Mammary epithelial cell (primary cell): ENCODE measurements at regions of chr12 and their contacts with region 1.

Region 1: DNA sequence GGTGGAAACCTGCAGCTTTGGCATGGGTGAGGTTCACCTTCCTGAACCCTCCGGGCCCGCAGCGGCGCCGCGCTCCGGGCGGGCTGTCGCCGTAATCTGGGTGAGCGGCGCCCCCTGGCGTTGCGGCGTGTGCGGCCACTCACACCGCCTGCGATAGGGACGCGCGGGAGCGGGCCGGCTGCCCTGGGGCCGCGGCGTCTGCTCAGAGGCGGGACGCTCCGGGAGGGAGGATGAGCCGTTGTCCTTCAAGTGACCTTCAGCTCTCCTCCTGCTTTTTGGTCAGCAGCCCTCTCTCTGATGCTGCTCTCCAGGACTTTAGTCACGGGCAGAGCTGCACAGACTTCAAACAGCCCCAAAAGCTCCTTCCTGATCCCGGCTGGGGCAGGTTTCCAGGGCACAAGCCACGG is 211.7 kb upstream of the FKBP4 start:
- DNase-seq: peak; percentile 25
- H3K4me3 ChIP-seq: no peak overlapping the region
- H3K27ac ChIP-seq: no peak overlapping the region
- H3K4me1 ChIP-seq: peaks cover 5% of the 10 kb centered on the region
- H3K27me3 ChIP-seq: peaks cover 5% of the 10 kb centered on the region
- CTCF ChIP-seq: peak; percentile 61 to 73

Region 2: DNA sequence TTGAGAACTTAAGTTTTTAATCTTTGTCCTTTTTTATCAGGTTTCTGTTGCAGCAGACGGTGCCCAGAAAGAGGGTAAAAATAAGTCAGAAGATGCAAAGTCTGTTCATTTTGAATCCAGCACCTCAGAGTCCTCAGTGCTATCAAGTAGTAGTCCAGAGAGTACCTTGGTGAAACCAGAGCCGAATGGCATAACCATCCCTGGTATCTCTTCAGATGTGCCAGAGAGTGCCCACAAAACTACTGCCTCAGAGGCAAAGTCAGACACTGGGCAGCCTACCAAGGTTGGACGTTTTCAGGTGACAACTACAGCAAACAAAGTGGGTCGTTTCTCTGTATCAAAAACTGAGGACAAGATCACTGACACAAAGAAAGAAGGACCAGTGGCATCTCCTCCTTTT is 1687.1 kb before region 1 on chr12:
- CTCF ChIA-PET with region 1: no interaction called
- dilution Hi-C with region 1: no loop called
- in situ Hi-C with region 1: no loop called
- intact Hi-C with region 1: no loop called
- DNase-seq: no peak
- H3K4me3 ChIP-seq: no peak overlapping the region
- H3K27ac ChIP-seq: no peak overlapping the region
- H3K4me1 ChIP-seq: no peaks in the 10 kb centered on the region
- H3K27me3 ChIP-seq: no peaks in the 10 kb centered on the region
- CTCF ChIP-seq: no peak

Region 3: GRCh38 chr12:1634590-1635191 is 948.4 kb before region 1 on chr12:
- CTCF ChIA-PET with region 1: no interaction called
- dilution Hi-C with region 1: no loop called
- in situ Hi-C with region 1: loop called (anchors 25 kb)
- intact Hi-C with region 1: loop called (anchors 10 kb)
- DNase-seq: peak; percentile 43
- H3K4me3 ChIP-seq: no peak overlapping the region
- H3K27ac ChIP-seq: no peak overlapping the region
- H3K4me1 ChIP-seq: peaks cover 9% of the 10 kb centered on the region
- H3K27me3 ChIP-seq: peaks cover 2% of the 10 kb centered on the region
- CTCF ChIP-seq: peak; percentile 95 to 97

Region 4: GRCh38 chr12:1939801-1940607 is 643.1 kb before region 1 on chr12:
- CTCF ChIA-PET with region 1: interaction called, 3 read pairs
- dilution Hi-C with region 1: no loop called
- in situ Hi-C with region 1: no loop called
- intact Hi-C with region 1: loop called (anchors 10 kb)
- DNase-seq: peak; percentile 57
- H3K4me3 ChIP-seq: no peak overlapping the region
- H3K27ac ChIP-seq: no peak overlapping the region
- H3K4me1 ChIP-seq: no peaks in the 10 kb centered on the region
- H3K27me3 ChIP-seq: no peaks in the 10 kb centered on the region
- CTCF ChIP-seq: peak; percentile 90 to 95

Region 5: DNA sequence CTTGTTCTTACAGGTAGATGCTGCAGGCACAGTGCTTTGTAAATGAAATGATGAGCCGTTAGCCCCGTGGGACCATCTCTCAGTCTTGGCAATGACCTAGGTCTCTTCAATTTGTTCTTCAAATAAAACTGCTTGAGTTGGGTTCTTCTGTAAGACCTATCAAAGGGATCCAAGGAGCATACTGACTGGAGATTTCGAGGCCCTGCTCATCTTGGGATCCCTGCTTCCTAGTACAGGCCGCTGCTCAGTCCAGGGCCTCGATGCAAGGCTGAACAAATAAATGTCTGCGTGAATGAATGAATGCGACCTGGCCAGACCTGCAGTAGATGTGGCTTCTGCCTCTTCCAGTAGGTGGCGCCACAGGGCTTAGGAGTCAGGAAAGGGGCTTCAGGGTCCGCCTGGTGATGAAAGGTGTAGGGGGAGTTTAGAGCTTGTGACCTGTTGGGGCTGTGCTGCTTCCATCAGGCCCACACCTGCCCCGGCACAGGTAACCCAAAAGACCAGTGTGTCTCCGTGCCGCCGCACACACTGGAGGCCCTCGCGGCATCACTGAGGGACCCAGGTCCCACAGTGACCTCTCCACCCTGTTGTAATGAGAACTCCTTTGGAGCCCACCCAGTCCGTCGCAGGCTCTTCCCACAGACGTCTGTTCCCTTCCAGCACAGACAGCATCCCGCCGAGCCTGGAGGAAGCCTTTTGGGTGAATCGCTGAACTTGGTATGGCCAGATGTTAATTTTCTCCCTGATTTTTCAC is 525.9 kb before region 1 on chr12:
- CTCF ChIA-PET with region 1: no interaction called
- dilution Hi-C with region 1: no loop called
- in situ Hi-C with region 1: loop called (anchors 10 kb)
- intact Hi-C with region 1: loop called (anchors 1 kb)
- DNase-seq: peak; percentile 14
- H3K4me3 ChIP-seq: no peak overlapping the region
- H3K27ac ChIP-seq: no peak overlapping the region
- H3K4me1 ChIP-seq: no peaks in the 10 kb centered on the region
- H3K27me3 ChIP-seq: peaks cover 31% of the 10 kb centered on the region
- CTCF ChIP-seq: peak; percentile 81 to 86

Region 6: DNA sequence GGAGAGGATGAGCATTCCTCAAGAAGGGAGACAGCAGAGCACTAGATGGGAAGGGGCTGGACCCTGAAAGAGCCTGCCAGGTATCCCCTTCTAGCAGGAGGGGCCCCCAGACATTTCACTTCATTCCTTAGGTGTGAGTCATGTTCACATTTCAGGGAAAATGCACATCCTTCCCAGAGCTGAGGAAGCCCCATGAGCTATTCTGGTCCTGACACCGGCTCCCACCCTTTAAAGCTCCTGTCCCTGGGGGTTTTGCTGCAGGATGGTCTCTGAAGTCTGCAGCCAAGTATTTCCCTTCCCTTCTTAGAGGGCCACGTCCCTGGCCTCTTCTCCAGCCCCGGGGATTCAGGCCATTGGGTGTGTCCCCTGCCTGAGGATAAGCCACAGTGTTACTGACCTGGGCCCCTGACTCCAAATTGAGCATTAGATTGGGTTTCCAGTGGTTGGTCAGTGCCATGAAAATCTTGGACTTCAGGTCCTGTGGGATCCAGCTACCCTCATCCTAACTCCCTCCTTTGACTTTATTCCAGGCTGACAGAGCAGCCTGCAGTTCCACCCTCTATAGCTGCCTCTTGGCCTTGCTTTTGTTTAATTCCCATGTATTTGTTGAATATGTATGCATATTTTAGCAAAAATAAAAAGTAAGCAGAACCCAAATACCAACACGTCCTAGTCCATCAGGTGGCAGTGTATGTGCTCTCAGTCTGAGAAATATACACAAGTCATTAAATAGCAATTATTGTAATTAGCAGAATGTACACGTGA is 263.2 kb before region 1 on chr12:
- CTCF ChIA-PET with region 1: no interaction called
- dilution Hi-C with region 1: no loop called
- in situ Hi-C with region 1: no loop called
- intact Hi-C with region 1: loop called (anchors 1 kb)
- DNase-seq: no peak
- H3K4me3 ChIP-seq: no peak overlapping the region
- H3K27ac ChIP-seq: no peak overlapping the region
- H3K4me1 ChIP-seq: no peaks in the 10 kb centered on the region
- H3K27me3 ChIP-seq: no peaks in the 10 kb centered on the region
- CTCF ChIP-seq: no peak

Region 7: DNA sequence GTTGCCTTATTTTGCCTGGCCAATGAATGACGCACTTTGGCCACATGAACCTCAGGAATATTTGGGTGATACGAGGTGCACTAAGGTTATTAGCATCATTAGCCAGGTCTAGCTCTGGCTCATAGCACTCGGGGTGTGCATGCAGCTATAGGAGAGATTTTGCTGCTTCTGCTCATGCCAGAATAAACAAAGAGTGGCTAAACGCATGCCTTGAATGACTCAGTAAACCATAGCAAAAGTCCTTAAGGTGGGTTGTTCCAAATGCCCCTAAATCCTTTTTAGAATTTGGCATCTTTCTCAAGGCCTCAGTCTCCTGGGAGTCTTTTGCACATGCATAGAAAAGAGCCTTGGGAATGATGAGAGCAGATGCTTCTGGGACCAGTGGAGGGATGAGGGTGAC is 132.1 kb before region 1 on chr12:
- CTCF ChIA-PET with region 1: no interaction called
- dilution Hi-C with region 1: no loop called
- in situ Hi-C with region 1: no loop called
- intact Hi-C with region 1: no loop called
- DNase-seq: no peak
- H3K4me3 ChIP-seq: no peak overlapping the region
- H3K27ac ChIP-seq: no peak overlapping the region
- H3K4me1 ChIP-seq: no peaks in the 10 kb centered on the region
- H3K27me3 ChIP-seq: peaks cover 3% of the 10 kb centered on the region
- CTCF ChIP-seq: no peak

Region 8: DNA sequence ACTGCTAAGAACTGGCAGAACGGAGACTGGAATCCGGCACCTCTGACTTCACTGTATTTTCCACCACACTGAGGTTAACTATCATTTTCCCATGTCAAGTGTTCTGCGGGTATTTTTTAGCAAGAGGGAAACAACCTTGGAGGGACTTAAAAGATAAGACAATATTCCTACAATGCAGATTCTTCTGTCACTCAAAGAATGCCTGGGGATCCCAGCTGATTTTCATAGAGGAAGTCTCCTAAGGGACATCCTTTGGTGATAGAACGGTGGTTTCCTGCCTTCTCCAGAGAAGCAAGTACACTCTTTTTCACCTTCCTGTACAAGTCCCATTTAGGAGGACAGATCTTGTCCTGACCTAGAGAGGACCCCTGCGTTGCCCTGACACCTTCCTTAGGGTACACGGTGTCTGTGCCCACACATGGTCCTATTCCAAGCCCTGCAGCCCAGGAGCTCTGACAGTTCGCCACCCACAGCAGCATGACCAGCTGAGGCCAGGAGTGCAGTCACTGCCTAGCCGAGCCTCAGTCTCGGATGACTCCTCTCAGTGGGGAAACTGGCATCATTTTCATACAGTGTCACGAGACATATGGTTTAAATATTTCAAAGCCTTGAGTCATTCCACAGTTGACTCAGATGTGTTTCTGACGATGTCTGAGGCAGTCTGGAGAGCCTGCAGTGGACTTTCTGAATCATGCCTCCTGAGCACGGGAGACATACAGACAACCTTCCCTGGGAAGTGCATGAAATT is 30.4 kb after region 1 on chr12:
- CTCF ChIA-PET with region 1: no interaction called
- dilution Hi-C with region 1: no loop called
- in situ Hi-C with region 1: no loop called
- intact Hi-C with region 1: loop called (anchors 2 kb)
- DNase-seq: peak; percentile 94
- H3K4me3 ChIP-seq: no peak overlapping the region
- H3K27ac ChIP-seq: no peak overlapping the region
- H3K4me1 ChIP-seq: peaks cover 8% of the 10 kb centered on the region
- H3K27me3 ChIP-seq: no peaks in the 10 kb centered on the region
- CTCF ChIP-seq: no peak

Region 9: GRCh38 chr12:2791074-2791473 is 208.0 kb after region 1 on chr12:
- CTCF ChIA-PET with region 1: no interaction called
- dilution Hi-C with region 1: no loop called
- in situ Hi-C with region 1: no loop called
- intact Hi-C with region 1: no loop called
- DNase-seq: no peak
- H3K4me3 ChIP-seq: no peak overlapping the region
- H3K27ac ChIP-seq: no peak overlapping the region
- H3K4me1 ChIP-seq: peaks cover 7% of the 10 kb centered on the region
- H3K27me3 ChIP-seq: no peaks in the 10 kb centered on the region
- CTCF ChIP-seq: no peak